ENCODE measurements at regions of chr1 and their contacts with region 1.

Region 1: DNA sequence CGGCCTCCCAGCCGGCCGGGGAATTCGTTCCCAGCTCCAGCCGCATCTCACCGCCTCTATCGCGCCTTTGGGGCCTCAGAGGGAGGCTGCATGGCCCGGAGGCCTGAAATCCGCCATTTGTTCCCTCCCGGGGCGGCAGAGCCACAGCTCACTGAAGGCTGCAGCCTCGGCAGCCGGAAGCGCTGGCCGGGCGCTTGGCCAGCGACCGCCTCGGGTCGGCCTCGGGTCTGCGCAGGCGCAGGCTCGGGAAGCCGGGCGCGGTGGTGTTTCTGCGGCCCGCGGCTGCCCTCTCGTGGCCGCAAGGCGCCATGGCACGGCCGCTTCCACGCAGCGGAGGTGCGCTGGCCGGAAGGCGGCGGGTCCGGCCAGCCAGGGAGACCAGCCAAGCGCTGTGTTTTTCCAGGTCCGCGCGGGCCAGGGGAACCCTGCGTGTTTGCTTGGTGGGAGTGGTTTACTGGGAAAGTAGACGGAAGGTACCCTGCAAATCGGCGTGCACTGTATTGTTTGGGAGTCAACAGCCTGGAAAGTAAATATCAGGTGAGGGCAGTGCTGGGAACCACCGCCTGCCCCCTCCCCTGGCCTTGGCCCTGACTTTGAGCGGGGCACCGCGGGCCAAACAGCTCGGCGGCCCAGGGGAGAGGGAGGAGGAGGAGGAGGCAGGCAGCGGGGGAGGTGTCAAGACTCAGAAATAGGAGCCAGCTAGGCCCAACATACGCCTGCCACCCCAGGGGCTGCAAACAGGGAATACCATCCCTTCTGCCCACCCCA is 52.7 kb upstream of the CD34 start:
- DNase-seq: peak; percentile 90
- H3K4me3 ChIP-seq: peak overlapping the region; percentile 59 to 65
- H3K27ac ChIP-seq: peak overlapping the region; percentile 86 to 87
- H3K4me1 ChIP-seq: peaks cover 41% of the 10 kb centered on the region
- H3K27me3 ChIP-seq: no peaks in the 10 kb centered on the region
- CTCF ChIP-seq: peak; percentile 100
- POLR2A ChIP-seq: no peak

Region 2: GRCh38 chr1:207748737-207749528 is 214.7 kb before region 1 on chr1:
- intact Hi-C with region 1: no loop called
- DNase-seq: no peak
- H3K4me3 ChIP-seq: no peak overlapping the region
- H3K27ac ChIP-seq: no peak overlapping the region
- H3K4me1 ChIP-seq: peaks cover 11% of the 10 kb centered on the region
- H3K27me3 ChIP-seq: no peaks in the 10 kb centered on the region
- CTCF ChIP-seq: no peak
- POLR2A ChIP-seq: no peak

Region 3: DNA sequence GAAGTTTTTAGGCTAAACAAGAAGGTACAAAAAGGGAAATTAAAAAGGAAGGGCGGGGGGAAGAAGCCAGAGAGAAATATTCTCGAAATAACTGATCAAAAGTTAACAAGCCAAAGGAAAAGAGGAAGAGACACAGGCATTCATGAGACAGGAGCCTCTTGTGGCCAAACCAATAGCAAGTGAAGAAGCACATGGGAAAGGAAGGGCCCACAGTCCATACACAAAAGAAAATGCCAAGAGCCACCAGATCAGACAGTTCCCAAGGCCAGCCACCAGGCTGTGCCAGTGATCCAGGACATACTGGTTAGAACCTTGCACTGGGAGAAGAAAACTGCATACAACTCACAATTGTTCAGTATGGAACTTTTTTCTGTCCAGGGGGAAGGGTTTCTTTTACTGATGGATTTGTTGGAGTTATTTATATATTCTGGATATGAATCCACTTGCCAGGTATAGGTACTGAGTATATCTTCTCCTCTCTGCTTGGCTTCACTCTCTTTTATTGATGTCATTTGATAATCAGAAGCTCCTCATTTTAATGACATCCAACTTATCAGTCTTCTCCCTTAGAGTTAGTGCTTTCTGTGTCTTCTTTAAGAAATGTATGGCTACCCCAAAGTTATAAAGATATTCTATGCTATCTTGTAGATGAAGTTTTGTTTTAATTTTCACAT is 135.0 kb before region 1 on chr1:
- intact Hi-C with region 1: loop called (anchors 5 kb)
- DNase-seq: peak; percentile 88
- H3K4me3 ChIP-seq: no peak overlapping the region
- H3K27ac ChIP-seq: peak overlapping the region; percentile 67 to 95
- H3K4me1 ChIP-seq: peaks cover 66% of the 10 kb centered on the region
- H3K27me3 ChIP-seq: no peaks in the 10 kb centered on the region
- CTCF ChIP-seq: peak; percentile 83 to 85 (median 84)
- POLR2A ChIP-seq: no peak

Region 4: GRCh38 chr1:207885129-207886032 is 78.2 kb before region 1 on chr1:
- intact Hi-C with region 1: loop called (anchors 5 kb)
- DNase-seq: peak; percentile 94
- H3K4me3 ChIP-seq: no peak overlapping the region
- H3K27ac ChIP-seq: peak overlapping the region in 1 of 2 donors; percentile 71
- H3K4me1 ChIP-seq: peaks cover 21% of the 10 kb centered on the region
- H3K27me3 ChIP-seq: no peaks in the 10 kb centered on the region
- CTCF ChIP-seq: peak; percentile 95 to 96 (median 95)
- POLR2A ChIP-seq: no peak

Measured in testis (tissue), 5 donors.